Activated B cell treated with CpG ODN at 0.5 μM for 24 hours (primary cell): ENCODE measurements at regions of chr14 and their contacts with region 1.

Region 1: DNA sequence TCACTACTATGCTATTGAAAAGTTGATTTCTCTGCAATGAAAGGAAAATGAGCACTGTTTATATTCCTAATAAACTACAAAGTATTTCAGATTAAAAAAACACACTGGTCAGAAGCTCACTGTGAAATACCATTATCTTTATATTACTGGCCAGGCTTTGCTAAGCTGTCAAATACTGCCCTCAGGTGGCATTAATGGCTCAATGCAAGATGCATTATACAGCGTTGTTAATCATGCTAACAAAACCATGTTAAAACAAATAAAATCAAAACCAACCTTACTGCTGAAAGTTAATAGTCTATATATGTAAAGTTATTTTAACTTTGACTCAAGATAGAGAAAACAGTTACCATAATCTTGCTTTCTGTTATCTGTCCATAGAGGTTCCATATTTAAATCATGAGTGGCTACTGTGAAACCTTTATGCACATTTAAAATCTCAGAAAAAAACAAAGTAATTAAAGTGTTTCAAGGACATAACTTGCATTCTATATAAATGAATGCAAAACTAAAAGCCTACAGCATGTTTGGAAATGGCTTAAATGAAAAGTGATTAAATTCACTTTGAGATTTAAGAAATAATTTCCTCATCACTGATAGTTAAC is 121.7 kb downstream of the RALGAPA1 start:
- DNase-seq: no peak
- ATAC-seq: peak; percentile 60
- H3K4me3 Mint-ChIP-seq: no peak overlapping the region
- H3K27ac Mint-ChIP-seq: no peak overlapping the region
- H3K4me1 Mint-ChIP-seq: peaks cover 11% of the 10 kb centered on the region
- H3K27me3 Mint-ChIP-seq: no peaks in the 10 kb centered on the region
- CTCF ChIP-seq: peak; percentile 51

Region 2: GRCh38 chr14:35140718-35141581 is 546.5 kb before region 1 on chr14:
- CTCF ChIA-PET with region 1: interaction called, 21 read pairs
- POLR2A ChIA-PET with region 1: no interaction called
- intact Hi-C with region 1: loop called (anchors 1 kb)
- DNase-seq: no peak
- ATAC-seq: no peak
- H3K4me3 Mint-ChIP-seq: no peak overlapping the region
- H3K27ac Mint-ChIP-seq: no peak overlapping the region
- H3K4me1 Mint-ChIP-seq: peaks cover 2% of the 10 kb centered on the region
- H3K27me3 Mint-ChIP-seq: no peaks in the 10 kb centered on the region
- CTCF ChIP-seq: peak; percentile 58

Region 3: DNA sequence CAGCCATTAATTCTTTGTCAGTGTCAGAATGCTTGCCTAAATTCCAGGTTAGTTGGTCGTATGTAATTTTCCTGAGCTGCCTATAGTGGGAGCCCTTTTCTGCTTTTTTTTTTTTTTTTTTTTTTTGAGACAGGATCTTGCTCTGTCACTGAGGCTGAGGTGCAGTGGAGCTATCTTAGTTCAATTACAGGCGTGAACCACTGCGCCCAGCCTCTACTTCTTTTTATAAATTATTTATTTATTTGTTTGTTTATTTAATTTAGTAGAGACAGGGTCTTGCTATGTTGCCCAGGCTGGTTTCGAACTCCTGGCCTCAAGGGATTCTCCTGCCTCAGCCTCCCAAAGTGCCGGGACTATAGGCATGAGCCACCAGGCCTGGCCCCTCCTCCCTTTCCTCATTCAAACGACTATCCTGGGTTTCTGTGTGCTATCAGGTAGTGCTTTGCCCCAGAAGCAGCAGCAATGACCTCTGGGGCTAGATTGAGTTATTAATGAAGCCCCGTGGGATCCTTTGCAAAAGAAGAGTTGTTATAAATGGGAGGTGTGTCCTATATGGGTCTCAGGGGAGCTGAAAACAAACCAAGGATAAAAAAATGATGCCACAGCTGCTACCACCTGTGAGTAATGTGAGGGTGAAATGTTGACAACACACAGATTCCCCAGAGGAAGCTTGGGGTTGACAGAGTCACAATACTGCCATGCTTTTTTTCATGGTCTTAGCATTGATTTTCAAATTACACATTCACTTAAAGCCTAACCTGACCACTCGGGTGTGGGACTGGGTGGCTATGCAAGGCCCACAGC is 248.3 kb before region 1 on chr14:
- CTCF ChIA-PET with region 1: interaction called, 7 read pairs
- POLR2A ChIA-PET with region 1: no interaction called
- intact Hi-C with region 1: loop called (anchors 5 kb)
- DNase-seq: no peak
- ATAC-seq: peak; percentile 93
- H3K4me3 Mint-ChIP-seq: no peak overlapping the region
- H3K27ac Mint-ChIP-seq: no peak overlapping the region
- H3K4me1 Mint-ChIP-seq: peaks cover 10% of the 10 kb centered on the region
- H3K27me3 Mint-ChIP-seq: peaks cover 3% of the 10 kb centered on the region
- CTCF ChIP-seq: no peak

Region 4: GRCh38 chr14:35533357-35534207 is 153.9 kb before region 1 on chr14 and contains the start of gene INSM2:
- CTCF ChIA-PET with region 1: no interaction called
- POLR2A ChIA-PET with region 1: no interaction called
- intact Hi-C with region 1: loop called (anchors 10 kb)
- DNase-seq: peak; percentile 55
- ATAC-seq: peak; percentile 76
- H3K4me3 Mint-ChIP-seq: peak within 1 kb of the TSS; percentile 81
- H3K27ac Mint-ChIP-seq: no peak within 1 kb of the TSS
- H3K4me1 Mint-ChIP-seq: peaks cover 16% of the 10 kb centered on the region
- H3K27me3 Mint-ChIP-seq: peaks cover 41% of the 10 kb centered on the region
- CTCF ChIP-seq: no peak
- total RNA-seq, gene INSM2: not detected in 2 replicates

Region 5: DNA sequence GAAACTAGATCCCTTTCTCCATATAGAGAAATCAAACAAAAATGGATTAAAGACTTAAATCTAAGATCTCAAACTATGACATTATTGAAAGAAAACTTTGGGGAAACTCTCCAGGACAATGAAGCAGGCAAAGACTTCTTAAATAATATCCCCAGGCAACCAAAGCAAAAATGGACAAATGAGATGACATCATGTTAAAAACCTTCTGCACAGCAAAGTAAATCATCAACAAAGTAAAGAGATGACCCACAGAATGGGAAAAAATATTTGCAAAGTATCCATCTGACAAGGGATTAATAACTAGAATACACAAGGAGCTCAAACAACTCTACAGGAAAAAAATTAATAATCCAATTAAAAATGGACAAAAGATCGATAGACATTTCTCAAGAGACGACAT is 20.6 kb after region 1 on chr14:
- CTCF ChIA-PET with region 1: no interaction called
- POLR2A ChIA-PET with region 1: no interaction called
- intact Hi-C with region 1: no loop called
- DNase-seq: no peak
- ATAC-seq: no peak
- H3K4me3 Mint-ChIP-seq: no peak overlapping the region
- H3K27ac Mint-ChIP-seq: no peak overlapping the region
- H3K4me1 Mint-ChIP-seq: no peaks in the 10 kb centered on the region
- H3K27me3 Mint-ChIP-seq: no peaks in the 10 kb centered on the region
- CTCF ChIP-seq: no peak

Region 6: GRCh38 chr14:35814371-35815005 is 127.1 kb after region 1 on chr14:
- CTCF ChIA-PET with region 1: interaction called, 3 read pairs
- POLR2A ChIA-PET with region 1: no interaction called
- intact Hi-C with region 1: loop called (anchors 5 kb)
- DNase-seq: peak; percentile 37
- ATAC-seq: peak; percentile 90
- H3K4me3 Mint-ChIP-seq: no peak overlapping the region
- H3K27ac Mint-ChIP-seq: no peak overlapping the region
- H3K4me1 Mint-ChIP-seq: peaks cover 4% of the 10 kb centered on the region
- H3K27me3 Mint-ChIP-seq: no peaks in the 10 kb centered on the region
- CTCF ChIP-seq: peak; percentile 56